ENCODE measurements at regions of chr18 and their contacts with region 1.

Region 1: GRCh38 chr18:30280880-30281470 is 761.6 kb downstream of the DSC3 start:
- DNase-seq: peak in 1 of 2 experiments; percentile 28
- H3K4me3 ChIP-seq: no peak overlapping the region
- H3K4me3 Mint-ChIP-seq: no peak overlapping the region
- H3K27ac Mint-ChIP-seq: no peak overlapping the region
- H3K4me1 ChIP-seq: no peaks in the 10 kb centered on the region
- H3K4me1 Mint-ChIP-seq: no peaks in the 10 kb centered on the region
- H3K27me3 ChIP-seq: no peaks in the 10 kb centered on the region
- H3K27me3 Mint-ChIP-seq: no peaks in the 10 kb centered on the region
- CTCF ChIP-seq: peak; percentile 24 to 31

Region 2: GRCh38 chr18:29874519-29875098 is 406.4 kb before region 1 on chr18:
- CTCF ChIA-PET with region 1: interaction called, 3 read pairs
- POLR2A ChIA-PET with region 1: no interaction called
- intact Hi-C with region 1: loop called (anchors 1 kb)
- DNase-seq: peak in 1 of 2 experiments; percentile 34
- H3K4me3 ChIP-seq: no peak overlapping the region
- H3K4me3 Mint-ChIP-seq: no peak overlapping the region
- H3K27ac Mint-ChIP-seq: no peak overlapping the region
- H3K4me1 ChIP-seq: no peaks in the 10 kb centered on the region
- H3K4me1 Mint-ChIP-seq: no peaks in the 10 kb centered on the region
- H3K27me3 ChIP-seq: no peaks in the 10 kb centered on the region
- H3K27me3 Mint-ChIP-seq: peaks cover 3% of the 10 kb centered on the region
- CTCF ChIP-seq: peak; percentile 28 to 36

Region 3: GRCh38 chr18:30088238-30089015 is 192.5 kb before region 1 on chr18:
- CTCF ChIA-PET with region 1: no interaction called
- POLR2A ChIA-PET with region 1: no interaction called
- intact Hi-C with region 1: no loop called
- DNase-seq: no peak
- H3K4me3 ChIP-seq: no peak overlapping the region
- H3K4me3 Mint-ChIP-seq: no peak overlapping the region
- H3K27ac Mint-ChIP-seq: no peak overlapping the region
- H3K4me1 ChIP-seq: no peaks in the 10 kb centered on the region
- H3K4me1 Mint-ChIP-seq: no peaks in the 10 kb centered on the region
- H3K27me3 ChIP-seq: no peaks in the 10 kb centered on the region
- H3K27me3 Mint-ChIP-seq: peaks cover 2% of the 10 kb centered on the region
- CTCF ChIP-seq: no peak

Region 4: GRCh38 chr18:30583768-30584167 is 302.8 kb after region 1 on chr18:
- CTCF ChIA-PET with region 1: no interaction called
- POLR2A ChIA-PET with region 1: no interaction called
- intact Hi-C with region 1: no loop called
- DNase-seq: no peak
- H3K4me3 ChIP-seq: no peak overlapping the region
- H3K4me3 Mint-ChIP-seq: no peak overlapping the region
- H3K27ac Mint-ChIP-seq: no peak overlapping the region
- H3K4me1 ChIP-seq: no peaks in the 10 kb centered on the region
- H3K4me1 Mint-ChIP-seq: no peaks in the 10 kb centered on the region
- H3K27me3 ChIP-seq: no peaks in the 10 kb centered on the region
- H3K27me3 Mint-ChIP-seq: peaks cover 6% of the 10 kb centered on the region
- CTCF ChIP-seq: no peak

Region 5: GRCh38 chr18:30595942-30596341 is 315.0 kb after region 1 on chr18:
- CTCF ChIA-PET with region 1: no interaction called
- POLR2A ChIA-PET with region 1: no interaction called
- intact Hi-C with region 1: no loop called
- DNase-seq: no peak
- H3K4me3 ChIP-seq: no peak overlapping the region
- H3K4me3 Mint-ChIP-seq: no peak overlapping the region
- H3K27ac Mint-ChIP-seq: no peak overlapping the region
- H3K4me1 ChIP-seq: no peaks in the 10 kb centered on the region
- H3K4me1 Mint-ChIP-seq: no peaks in the 10 kb centered on the region
- H3K27me3 ChIP-seq: no peaks in the 10 kb centered on the region
- H3K27me3 Mint-ChIP-seq: no peaks in the 10 kb centered on the region
- CTCF ChIP-seq: no peak